Activated B cell treated with CpG ODN at 0.5 μM for 24 hours (primary cell): ENCODE measurements at regions of chr1 and their contacts with region 1.

Region 1: DNA sequence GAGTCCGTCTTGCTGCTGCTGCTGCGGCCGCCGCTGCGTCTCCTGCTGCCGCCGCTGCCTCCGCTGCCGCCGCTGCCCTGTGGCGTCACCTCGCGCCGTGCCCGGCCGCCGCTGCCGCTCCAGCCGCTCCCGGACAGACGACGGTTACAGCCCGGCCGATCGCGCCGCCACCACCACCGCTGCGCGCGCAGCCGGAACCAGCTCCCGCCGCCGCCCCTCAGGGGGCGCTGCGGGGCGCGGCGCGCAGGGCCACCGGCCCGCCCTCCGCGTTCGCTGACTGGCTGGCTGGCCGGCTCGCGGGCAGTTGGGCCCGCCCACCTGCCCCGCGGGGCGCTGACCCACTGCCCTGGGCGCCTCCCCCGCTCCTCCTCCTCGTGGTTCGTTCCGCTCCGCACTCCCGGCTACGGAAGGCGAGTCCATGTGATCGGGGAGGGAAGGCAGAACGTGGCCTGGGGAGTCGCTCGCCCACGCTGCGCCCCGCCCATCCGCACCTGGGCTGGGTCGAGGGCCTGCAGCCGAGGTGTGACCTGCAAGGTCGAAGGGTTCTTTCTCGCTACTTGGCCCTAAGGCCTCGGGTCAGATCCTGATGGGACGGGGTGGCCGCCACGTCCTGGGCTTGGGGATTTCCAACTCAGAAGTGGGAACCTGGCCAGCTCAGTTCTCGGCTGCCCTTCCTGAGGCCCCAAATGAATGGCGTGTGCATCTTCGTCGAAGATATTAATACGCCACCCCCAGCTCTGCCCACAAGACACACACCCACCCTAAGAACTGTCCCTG is at the start of gene PTP4A2:
- DNase-seq: peak; percentile 88
- ATAC-seq: peak; percentile 78
- H3K4me3 Mint-ChIP-seq: peak within 1 kb of the TSS; percentile 91
- H3K27ac Mint-ChIP-seq: peak within 1 kb of the TSS; percentile 93
- H3K4me1 Mint-ChIP-seq: peaks cover 77% of the 10 kb centered on the region
- H3K27me3 Mint-ChIP-seq: no peaks in the 10 kb centered on the region
- CTCF ChIP-seq: no peak
- total RNA-seq, gene PTP4A2: 249 and 275 TPM in 2 replicates

Region 2: DNA sequence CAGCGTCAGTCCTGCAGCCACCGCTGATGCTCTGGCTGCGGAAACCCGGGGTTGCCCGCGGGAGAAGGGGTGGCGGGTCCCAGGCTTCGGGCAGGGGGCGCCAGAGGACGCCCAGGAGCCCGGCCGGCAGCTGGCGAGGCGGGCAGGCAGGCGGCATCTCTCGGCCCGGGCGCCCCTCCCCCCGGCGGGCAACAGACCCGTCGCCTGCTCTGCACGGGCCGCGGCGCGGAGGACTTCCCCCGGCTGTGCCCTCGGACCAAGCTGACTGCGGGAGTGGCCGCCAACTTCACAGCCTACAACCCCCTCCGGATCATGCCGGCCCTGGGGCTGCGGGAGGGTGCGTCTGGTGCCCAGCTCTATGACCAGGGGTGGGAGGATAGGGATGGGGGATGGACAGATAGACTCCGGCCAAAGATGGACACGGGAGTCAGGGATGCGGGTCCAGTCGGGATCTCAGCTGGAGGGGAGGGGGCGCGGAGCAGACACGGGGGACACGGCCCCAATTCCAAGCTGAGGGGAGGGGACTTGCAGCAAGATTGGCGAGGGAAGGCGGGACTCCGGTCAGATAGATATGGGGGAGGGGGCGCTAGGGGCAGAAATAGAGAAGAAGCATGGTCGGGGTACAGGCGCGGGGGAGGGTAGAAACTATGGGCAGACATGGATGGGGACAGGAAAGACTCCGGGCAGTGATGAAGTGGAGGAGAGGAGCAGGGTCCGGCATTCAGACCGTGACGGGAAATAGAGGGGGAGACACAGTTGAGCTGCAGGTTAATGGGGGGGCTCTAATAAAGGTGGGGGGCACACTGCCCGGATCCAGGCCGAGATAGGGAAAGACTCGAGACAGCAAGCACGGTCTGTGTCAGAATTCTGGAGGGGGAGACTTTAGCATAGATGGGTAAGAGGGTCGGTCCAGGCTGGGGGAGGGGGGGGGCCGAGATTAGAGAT is 175.4 kb before region 1 on chr1:
- CTCF ChIA-PET with region 1: interaction called, 4 read pairs
- POLR2A ChIA-PET with region 1: interaction called, 4 read pairs
- intact Hi-C with region 1: loop called (anchors 5 kb)
- DNase-seq: peak; percentile 79
- ATAC-seq: peak; percentile 51
- H3K4me3 Mint-ChIP-seq: peak overlapping the region; percentile 78
- H3K27ac Mint-ChIP-seq: no peak overlapping the region
- H3K4me1 Mint-ChIP-seq: peaks cover 32% of the 10 kb centered on the region
- H3K27me3 Mint-ChIP-seq: peaks cover 3% of the 10 kb centered on the region
- CTCF ChIP-seq: no peak

Region 3: GRCh38 chr1:31891280-31891679 is 47.1 kb before region 1 on chr1:
- CTCF ChIA-PET with region 1: no interaction called
- POLR2A ChIA-PET with region 1: interaction called, 11 read pairs
- intact Hi-C with region 1: loop called (anchors 5 kb)
- DNase-seq: no peak
- ATAC-seq: no peak
- H3K4me3 Mint-ChIP-seq: no peak overlapping the region
- H3K27ac Mint-ChIP-seq: no peak overlapping the region
- H3K4me1 Mint-ChIP-seq: peaks cover 28% of the 10 kb centered on the region
- H3K27me3 Mint-ChIP-seq: no peaks in the 10 kb centered on the region
- CTCF ChIP-seq: no peak

Region 4: DNA sequence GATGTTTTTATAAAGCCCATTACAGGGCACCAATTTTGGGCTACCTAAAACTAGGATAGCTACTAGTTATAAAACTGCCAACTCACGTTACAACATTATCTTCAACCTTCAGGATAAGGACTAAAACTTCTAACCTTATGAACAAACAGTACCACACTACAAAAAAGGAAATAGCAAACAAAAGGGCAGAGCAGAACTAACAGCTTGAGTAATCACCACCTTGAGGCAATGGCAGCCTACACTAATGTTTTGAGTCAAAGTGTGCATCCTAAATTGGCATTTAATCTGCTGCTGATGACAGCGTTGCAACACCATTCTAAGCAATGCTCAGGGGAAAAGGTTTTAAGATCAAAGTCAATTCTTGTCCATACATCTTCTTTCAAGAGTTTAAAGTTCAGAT is 27.4 kb before region 1 on chr1:
- CTCF ChIA-PET with region 1: interaction called, 3 read pairs
- POLR2A ChIA-PET with region 1: interaction called, 8 read pairs
- intact Hi-C with region 1: loop called (anchors 2 kb)
- DNase-seq: no peak
- ATAC-seq: peak; percentile 63
- H3K4me3 Mint-ChIP-seq: no peak overlapping the region
- H3K27ac Mint-ChIP-seq: peak overlapping the region; percentile 20
- H3K4me1 Mint-ChIP-seq: peaks cover 38% of the 10 kb centered on the region
- H3K27me3 Mint-ChIP-seq: no peaks in the 10 kb centered on the region
- CTCF ChIP-seq: no peak

Region 5: DNA sequence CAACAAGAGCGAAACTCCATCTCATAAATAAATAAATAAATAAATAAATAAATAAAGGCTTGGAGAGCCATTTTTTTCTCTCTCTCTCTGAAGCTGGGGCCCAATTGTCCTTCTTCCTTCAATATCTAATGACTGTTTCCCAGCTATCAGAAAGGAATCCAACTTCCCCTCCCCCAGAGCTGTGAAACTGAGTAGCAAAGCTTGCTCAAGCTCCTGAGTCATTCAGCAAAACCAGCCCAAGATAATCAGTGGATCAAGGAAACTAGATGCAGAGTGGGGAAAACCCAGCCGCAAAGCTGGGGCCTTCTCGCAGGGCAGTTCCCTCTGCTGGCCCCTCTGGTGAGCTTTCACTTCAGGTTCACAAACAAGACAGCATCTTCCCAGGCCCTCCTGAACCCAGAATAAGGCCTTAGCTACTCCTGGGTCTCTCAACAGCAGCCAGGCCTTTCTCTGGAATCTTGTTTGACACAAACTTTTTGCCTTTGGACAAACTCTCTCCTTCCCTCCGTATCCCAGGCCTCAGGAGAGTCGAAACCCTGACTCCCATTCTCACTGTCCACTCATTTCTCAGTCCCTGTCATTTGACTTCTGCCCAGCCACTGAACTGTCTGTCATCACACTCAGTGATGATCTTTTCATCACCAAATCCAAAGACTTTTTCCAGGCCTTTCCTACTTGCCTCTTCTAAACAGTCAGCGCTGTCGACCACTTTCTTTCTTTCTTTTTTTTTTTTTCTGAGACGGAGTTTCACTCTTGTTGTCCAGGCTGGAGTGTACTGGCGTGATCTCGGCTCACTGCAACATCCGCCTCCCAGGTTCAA is 17.8 kb after region 1 on chr1:
- CTCF ChIA-PET with region 1: interaction called, 75 read pairs
- POLR2A ChIA-PET with region 1: interaction called, 235 read pairs
- intact Hi-C with region 1: loop called (anchors 1 kb)
- DNase-seq: peak; percentile 56
- ATAC-seq: peak; percentile 97
- H3K4me3 Mint-ChIP-seq: peak overlapping the region; percentile 72
- H3K27ac Mint-ChIP-seq: peak overlapping the region; percentile 93
- H3K4me1 Mint-ChIP-seq: peaks cover 41% of the 10 kb centered on the region
- H3K27me3 Mint-ChIP-seq: no peaks in the 10 kb centered on the region
- CTCF ChIP-seq: no peak

Region 6: GRCh38 chr1:32013386-32014198 is 75.2 kb after region 1 on chr1 and contains the start of gene KHDRBS1:
- CTCF ChIA-PET with region 1: interaction called, 3 read pairs
- POLR2A ChIA-PET with region 1: interaction called, 5 read pairs
- intact Hi-C with region 1: loop called (anchors 1 kb)
- DNase-seq: peak; percentile 97
- ATAC-seq: peak; percentile 85
- H3K4me3 Mint-ChIP-seq: peak within 1 kb of the TSS; percentile 98
- H3K27ac Mint-ChIP-seq: peak within 1 kb of the TSS; percentile 91
- H3K4me1 Mint-ChIP-seq: peaks cover 39% of the 10 kb centered on the region
- H3K27me3 Mint-ChIP-seq: no peaks in the 10 kb centered on the region
- CTCF ChIP-seq: no peak
- total RNA-seq, gene KHDRBS1: 146 and 152 TPM in 2 replicates